Activated naive CD4-positive, alpha-beta T cell treated with anti-CD3 and anti-CD28 coated beads for 36 hours (primary cell): ENCODE measurements at regions of chr20 and their contacts with region 1.

Region 1: GRCh38 chr20:543369-544152 is at the start of gene CSNK2A1:
- DNase-seq: peak; percentile 96
- H3K4me3 Mint-ChIP-seq: peak within 1 kb of the TSS; percentile 81
- H3K27ac Mint-ChIP-seq: peak within 1 kb of the TSS; percentile 97
- H3K4me1 Mint-ChIP-seq: peaks cover 49% of the 10 kb centered on the region
- H3K27me3 Mint-ChIP-seq: peaks cover 2% of the 10 kb centered on the region
- total RNA-seq, gene CSNK2A1: 164 to 167 TPM

Region 2: GRCh38 chr20:431012-431904 is 112.3 kb before region 1 on chr20:
- CTCF ChIA-PET with region 1: no interaction called
- intact Hi-C with region 1: loop called (anchors 1 kb)
- DNase-seq: peak; percentile 75
- H3K4me3 Mint-ChIP-seq: no peak overlapping the region
- H3K27ac Mint-ChIP-seq: peak overlapping the region; percentile 89
- H3K4me1 Mint-ChIP-seq: peaks cover 57% of the 10 kb centered on the region
- H3K27me3 Mint-ChIP-seq: no peaks in the 10 kb centered on the region

Region 3: DNA sequence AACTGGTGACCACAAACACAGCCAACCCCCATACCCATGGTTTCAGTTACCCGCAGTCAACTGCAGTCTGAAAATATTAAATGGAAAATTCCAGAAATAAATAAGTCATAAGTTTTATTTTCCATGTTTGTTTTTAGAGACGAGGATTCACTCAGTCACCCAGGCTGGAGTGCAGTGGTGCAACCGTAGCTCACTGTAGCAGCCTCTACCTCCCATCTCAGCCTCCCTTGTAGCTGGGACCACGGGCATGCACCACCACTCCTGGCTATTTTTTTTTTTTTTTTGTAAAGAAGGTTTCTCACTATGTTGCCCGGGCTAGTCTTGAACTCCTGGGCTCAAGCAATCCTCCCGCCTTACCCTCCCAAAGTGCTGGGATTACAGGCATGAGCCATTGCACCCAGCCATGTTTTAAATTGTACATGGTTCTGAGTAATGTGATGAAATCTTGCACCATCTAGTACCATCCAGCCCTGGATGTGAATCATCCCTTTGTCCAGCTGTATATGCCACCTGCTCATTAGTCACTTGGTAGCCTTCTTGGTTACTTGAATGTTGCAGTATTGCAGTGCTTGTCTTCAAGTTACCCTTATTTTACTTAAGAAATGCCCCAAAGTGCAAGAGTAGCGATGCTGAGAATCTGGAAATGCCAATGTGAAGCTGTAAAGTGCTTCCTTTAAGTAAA is 14.5 kb before region 1 on chr20:
- CTCF ChIA-PET with region 1: interaction called, 12 read pairs
- intact Hi-C with region 1: loop called (anchors 1 kb)
- DNase-seq: peak; percentile 45
- H3K4me3 Mint-ChIP-seq: no peak overlapping the region
- H3K27ac Mint-ChIP-seq: peak overlapping the region; percentile 86
- H3K4me1 Mint-ChIP-seq: peaks cover 41% of the 10 kb centered on the region
- H3K27me3 Mint-ChIP-seq: no peaks in the 10 kb centered on the region

Region 4: GRCh38 chr20:634556-634955 is 91.0 kb after region 1 on chr20:
- CTCF ChIA-PET with region 1: no interaction called
- intact Hi-C with region 1: no loop called
- DNase-seq: no peak
- H3K4me3 Mint-ChIP-seq: no peak overlapping the region
- H3K27ac Mint-ChIP-seq: no peak overlapping the region
- H3K4me1 Mint-ChIP-seq: no peaks in the 10 kb centered on the region
- H3K27me3 Mint-ChIP-seq: peaks cover 2% of the 10 kb centered on the region

Region 5: DNA sequence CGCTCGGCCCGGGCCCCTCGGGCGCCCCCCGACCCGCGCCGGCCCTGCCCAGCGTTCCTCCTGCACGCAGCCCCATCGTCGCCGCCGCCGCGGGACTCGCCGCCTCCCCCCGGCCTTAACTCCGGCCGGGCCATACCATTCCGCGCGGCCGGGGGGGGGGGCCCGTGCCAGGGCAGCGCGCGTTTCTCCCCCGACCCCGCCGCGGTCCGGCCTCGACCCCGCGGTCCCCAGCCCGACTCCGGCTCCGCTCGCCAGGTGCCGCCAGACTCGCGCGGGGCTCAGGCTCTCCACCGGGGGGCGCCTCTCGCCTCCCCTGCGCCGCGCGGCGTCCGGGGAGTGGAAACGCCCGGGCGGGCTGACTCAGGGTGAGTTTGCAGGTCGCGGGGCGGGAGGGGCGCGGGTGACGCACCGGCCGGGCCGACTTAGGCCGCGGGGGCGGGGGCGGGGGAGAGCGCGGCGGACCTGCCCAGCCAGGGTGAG is 109.6 kb after region 1 on chr20 and contains the start of gene SRXN1:
- CTCF ChIA-PET with region 1: no interaction called
- intact Hi-C with region 1: loop called (anchors 1 kb)
- DNase-seq: peak; percentile 86
- H3K4me3 Mint-ChIP-seq: peak within 1 kb of the TSS; percentile 72
- H3K27ac Mint-ChIP-seq: peak within 1 kb of the TSS; percentile 4
- H3K4me1 Mint-ChIP-seq: peaks cover 8% of the 10 kb centered on the region
- H3K27me3 Mint-ChIP-seq: peaks cover 13% of the 10 kb centered on the region
- total RNA-seq, gene SRXN1: 6.7 to 6.8 TPM